Astrocyte of the cerebellum (primary cell): ENCODE measurements at regions of chr20 and their contacts with region 1.

Region 1: DNA sequence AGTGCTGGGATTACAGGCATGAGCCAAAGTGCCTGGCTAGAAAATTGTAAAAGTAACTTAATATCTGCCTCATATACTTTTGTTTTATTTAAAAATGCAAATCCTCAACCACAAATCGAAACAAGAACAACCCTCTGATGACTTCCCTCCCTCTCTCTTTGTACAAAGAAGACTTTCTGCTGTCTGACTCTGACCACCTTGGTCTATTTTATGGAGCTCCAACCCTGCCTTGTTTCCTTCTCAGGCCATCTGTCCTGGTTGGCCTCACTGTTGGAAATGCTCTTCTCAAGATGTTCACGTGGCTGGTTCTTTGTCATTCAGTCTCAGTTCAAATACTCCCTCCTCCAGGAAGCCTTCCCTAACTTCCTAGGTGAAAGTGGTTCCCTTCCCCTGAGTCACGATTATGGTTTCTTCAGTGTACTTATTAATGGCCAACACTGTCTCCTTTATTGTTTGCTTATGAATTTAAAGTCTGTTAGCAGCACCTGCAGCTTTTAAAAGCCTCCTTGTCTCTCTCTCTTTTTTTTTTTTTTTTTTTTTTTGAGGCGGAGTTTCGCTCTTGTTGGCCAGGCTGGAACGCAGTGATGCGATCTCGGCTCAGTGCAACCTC is 151.5 kb upstream of the SALL4 start:
- DNase-seq: no peak
- H3K4me3 ChIP-seq: no peak overlapping the region
- CTCF ChIP-seq: no peak

Region 2: GRCh38 chr20:51886891-51887608 is 66.8 kb before region 1 on chr20:
- in situ Hi-C with region 1: loop called (anchors 5 kb)
- DNase-seq: no peak
- H3K4me3 ChIP-seq: no peak overlapping the region
- CTCF ChIP-seq: no peak

Region 3: GRCh38 chr20:52001999-52002666 is 48.3 kb after region 1 on chr20:
- in situ Hi-C with region 1: no loop called
- DNase-seq: no peak
- H3K4me3 ChIP-seq: no peak overlapping the region
- CTCF ChIP-seq: peak; percentile 39